Naive thymus-derived CD4-positive, alpha-beta T cell (primary cell): ENCODE measurements at regions of chr3 and their contacts with region 1.

Region 1: DNA sequence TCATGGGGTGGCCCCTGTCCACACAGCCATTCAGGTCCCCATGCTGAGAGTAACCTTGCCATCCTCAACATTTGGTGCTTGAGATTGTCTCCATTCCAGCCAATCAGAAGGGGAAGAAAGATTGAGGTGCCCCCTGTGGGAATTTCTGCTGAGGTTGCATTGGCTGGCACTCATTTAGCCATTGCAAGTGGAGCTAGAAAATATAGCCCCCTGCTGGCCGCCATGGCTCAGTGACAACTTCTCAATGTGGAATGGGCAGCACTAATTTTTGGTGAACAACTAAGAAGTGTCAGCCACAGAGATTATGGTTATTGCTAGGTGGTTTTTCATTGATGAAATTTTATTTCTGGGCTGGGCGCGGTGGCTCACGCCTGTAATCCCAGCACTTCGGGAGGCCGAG is 22.0 kb downstream of the COL6A6 start:
- DNase-seq: peak in 4 of 9 donors; percentile 7 to 26 (median 18)
- ATAC-seq: no peak
- H3K4me3 ChIP-seq: no peak overlapping the region
- H3K4me3 Mint-ChIP-seq: no peak overlapping the region
- H3K27ac ChIP-seq: no peak overlapping the region
- H3K27ac Mint-ChIP-seq: no peak overlapping the region
- H3K4me1 ChIP-seq: no peaks in the 10 kb centered on the region
- H3K4me1 Mint-ChIP-seq: no peaks in the 10 kb centered on the region
- H3K27me3 ChIP-seq: no peaks in the 10 kb centered on the region
- H3K27me3 Mint-ChIP-seq: peaks cover 6 to 14% (median 9%) of the 10 kb centered on the region in 5 donors

Region 2: DNA sequence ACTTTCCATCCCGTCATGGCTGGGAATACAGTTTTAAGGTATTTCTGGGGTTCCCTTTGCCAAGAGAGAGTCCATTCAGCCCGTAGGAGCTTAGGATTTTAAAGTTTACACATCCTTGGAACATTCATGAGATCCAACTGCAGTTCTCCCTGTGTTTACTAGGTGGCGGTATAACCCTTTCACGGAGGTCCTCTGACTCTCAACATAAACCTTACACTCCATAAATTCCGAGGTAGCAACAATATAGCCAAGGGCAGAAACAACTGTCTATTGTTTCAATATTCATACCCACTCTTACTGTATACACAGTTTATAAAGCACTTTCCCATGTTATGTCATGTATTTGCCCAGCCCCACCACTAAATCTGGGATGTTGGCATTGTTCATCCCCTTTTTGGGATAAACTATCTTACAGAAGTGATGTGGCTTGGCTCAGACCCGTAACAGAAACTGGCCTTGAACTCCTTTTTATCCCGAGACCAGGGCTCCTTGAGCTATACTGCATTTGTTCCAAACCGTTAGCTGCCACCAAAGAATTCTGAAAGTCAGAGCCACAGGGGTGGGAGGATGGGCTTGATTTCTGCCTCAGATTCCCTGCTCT is 262.7 kb before region 1 on chr3:
- CTCF ChIA-PET with region 1: no interaction called
- POLR2A ChIA-PET with region 1: no interaction called
- intact Hi-C with region 1: loop called in 1 of 2 experiments (anchors 1 kb)
- DNase-seq: peak in 3 of 9 donors; percentile 2 to 4 (median 2)
- ATAC-seq: peak; percentile 46
- H3K4me3 ChIP-seq: no peak overlapping the region
- H3K4me3 Mint-ChIP-seq: no peak overlapping the region
- H3K27ac ChIP-seq: no peak overlapping the region
- H3K27ac Mint-ChIP-seq: no peak overlapping the region
- H3K4me1 ChIP-seq: no peaks in the 10 kb centered on the region
- H3K4me1 Mint-ChIP-seq: no peaks in the 10 kb centered on the region
- H3K27me3 ChIP-seq: no peaks in the 10 kb centered on the region
- H3K27me3 Mint-ChIP-seq: peaks cover 8 to 48% (median 36%) of the 10 kb centered on the region in 5 donors

Region 3: GRCh38 chr3:130288670-130289069 is 250.3 kb before region 1 on chr3:
- CTCF ChIA-PET with region 1: no interaction called
- POLR2A ChIA-PET with region 1: no interaction called
- intact Hi-C with region 1: no loop called
- DNase-seq: no peak
- ATAC-seq: no peak
- H3K4me3 ChIP-seq: no peak overlapping the region
- H3K4me3 Mint-ChIP-seq: no peak overlapping the region
- H3K27ac ChIP-seq: no peak overlapping the region
- H3K27ac Mint-ChIP-seq: no peak overlapping the region
- H3K4me1 ChIP-seq: no peaks in the 10 kb centered on the region
- H3K4me1 Mint-ChIP-seq: no peaks in the 10 kb centered on the region
- H3K27me3 ChIP-seq: peaks cover 0 to 4% of the 10 kb centered on the region in 2 donors
- H3K27me3 Mint-ChIP-seq: peaks cover 5 to 36% (median 33%) of the 10 kb centered on the region in 5 donors

Region 4: DNA sequence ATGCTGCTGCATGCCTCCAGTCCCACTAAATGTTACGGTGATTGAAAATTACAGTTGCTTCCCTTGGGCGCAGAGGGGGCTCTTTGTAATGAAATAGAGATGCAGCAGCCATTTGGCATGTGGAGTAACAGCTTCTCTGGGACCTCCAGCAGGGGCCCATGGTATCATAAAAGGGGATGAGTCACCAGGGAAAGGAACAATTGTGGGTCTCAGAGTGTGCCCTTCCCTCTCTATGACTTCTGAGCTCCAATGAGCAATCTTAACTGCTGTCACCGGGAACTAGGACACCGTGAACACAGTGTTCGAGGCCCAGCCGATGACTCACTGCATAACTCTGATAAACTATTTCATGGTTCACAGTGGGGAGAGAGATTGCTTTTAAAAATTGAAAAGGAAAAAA is 677.8 kb after region 1 on chr3:
- CTCF ChIA-PET with region 1: no interaction called
- POLR2A ChIA-PET with region 1: no interaction called
- intact Hi-C with region 1: no loop called
- DNase-seq: no peak
- ATAC-seq: no peak
- H3K4me3 ChIP-seq: no peak overlapping the region
- H3K4me3 Mint-ChIP-seq: no peak overlapping the region
- H3K27ac ChIP-seq: no peak overlapping the region
- H3K27ac Mint-ChIP-seq: no peak overlapping the region
- H3K4me1 ChIP-seq: no peaks in the 10 kb centered on the region
- H3K4me1 Mint-ChIP-seq: no peaks in the 10 kb centered on the region
- H3K27me3 ChIP-seq: no peaks in the 10 kb centered on the region
- H3K27me3 Mint-ChIP-seq: peaks cover 0 to 3% (median 0%) of the 10 kb centered on the region in 5 donors